CD4-positive, alpha-beta memory T cell (primary cell): ENCODE measurements at regions of chr11 and their contacts with region 1.

Region 1: DNA sequence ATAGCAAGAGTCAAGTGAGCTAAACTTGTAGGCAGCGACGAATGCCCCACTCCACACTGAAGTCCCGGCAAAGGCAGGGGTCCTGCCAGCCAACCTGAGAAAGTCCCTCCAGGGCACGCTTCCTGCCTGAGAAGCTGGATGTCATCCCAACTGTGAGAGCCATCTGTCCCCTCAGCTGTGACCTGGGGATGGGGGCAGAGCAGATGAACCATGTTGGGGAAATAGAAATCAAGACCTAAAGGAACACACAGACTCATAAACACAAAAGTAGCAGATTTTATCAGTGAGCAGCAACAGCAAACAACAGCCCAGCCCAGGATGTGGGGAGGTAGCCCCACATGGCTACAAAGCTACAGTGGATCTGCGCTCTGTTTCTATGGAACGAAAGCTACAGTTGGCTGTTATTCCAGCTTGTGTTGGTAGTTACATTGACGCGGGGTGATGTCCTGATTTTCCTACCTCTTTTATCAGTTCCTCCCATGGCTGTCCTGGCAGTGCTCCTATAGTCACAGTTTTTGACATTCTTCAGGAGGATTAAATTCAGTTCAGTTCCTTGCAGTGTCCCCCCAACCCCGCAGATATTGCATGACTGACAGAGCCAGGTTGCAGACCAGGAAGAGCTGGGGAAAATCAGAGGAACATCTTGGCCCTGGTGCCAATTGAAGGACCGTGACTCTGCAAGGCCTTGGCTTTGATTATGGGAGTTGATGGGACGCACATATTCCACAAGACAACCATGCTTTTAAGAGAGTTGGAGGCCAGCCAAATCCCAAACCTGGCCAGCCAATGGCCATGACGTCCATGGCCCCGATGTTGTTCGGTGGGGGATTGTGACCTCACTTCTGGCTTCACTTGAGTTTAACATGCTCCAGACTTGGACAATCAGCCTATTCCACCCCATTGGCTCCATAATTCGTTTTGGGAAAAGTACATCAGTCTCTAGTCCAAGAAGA is 14.6 kb downstream of the MRGPRD start:
- DNase-seq: peak in 4 of 5 donors; percentile 38 to 62 (median 46)
- H3K4me3 ChIP-seq: no peak overlapping the region
- H3K4me3 Mint-ChIP-seq: peak overlapping the region; percentile 24 to 79 (median 70)
- H3K27ac ChIP-seq: peak overlapping the region; percentile 0
- H3K27ac Mint-ChIP-seq: peak overlapping the region; percentile 79 to 96 (median 90)
- H3K4me1 ChIP-seq: peaks cover 48% of the 10 kb centered on the region
- H3K4me1 Mint-ChIP-seq: peaks cover 23 to 56% (median 41%) of the 10 kb centered on the region in 4 donors
- H3K27me3 ChIP-seq: no peaks in the 10 kb centered on the region
- H3K27me3 Mint-ChIP-seq: peaks cover 3 to 4% of the 10 kb centered on the region in 2 donors

Region 2: DNA sequence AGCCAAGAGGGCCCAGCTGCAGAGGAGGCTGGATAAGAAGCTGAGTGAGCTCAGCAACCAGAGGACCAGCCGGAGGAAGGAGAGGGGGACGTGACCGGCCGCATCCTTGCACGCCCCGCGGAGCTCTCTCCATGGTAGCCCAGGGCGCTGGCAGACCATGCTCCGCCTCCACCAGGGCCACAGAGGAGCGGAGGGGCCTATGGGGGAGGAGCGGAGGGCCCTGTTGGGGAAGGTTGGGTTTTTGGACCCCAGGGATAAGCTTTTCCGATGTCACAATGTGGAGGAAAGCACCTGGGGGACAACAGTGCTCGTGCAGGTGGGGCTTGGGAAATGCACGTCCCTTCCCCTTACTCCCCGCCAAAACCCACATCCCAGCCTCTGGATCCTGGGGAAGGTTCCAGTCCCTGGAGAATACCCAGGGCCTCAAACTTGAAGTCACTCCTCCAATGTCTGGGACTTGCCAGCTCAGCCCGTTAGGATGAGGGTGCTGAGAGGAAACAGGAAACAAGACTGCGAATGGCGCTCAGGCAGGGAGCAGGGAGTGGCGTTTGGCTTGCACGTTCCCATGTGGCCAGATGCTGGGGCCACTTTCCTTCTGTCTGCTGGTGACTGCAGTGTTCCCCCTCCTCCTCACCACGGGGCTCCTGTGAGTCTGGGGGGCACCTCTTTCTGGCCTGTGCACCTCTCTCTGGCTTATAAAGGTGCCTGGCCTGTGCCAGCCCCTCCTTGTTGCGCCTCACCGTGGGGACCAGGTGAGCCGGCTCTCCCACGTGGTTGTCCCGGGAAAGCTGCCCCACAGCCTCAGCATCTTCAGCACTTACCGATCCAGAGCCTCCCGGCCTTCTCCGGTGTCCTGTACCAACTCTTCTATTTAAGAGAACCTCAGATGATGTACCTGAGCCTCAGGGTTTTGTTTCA is 26.3 kb before region 1 on chr11:
- CTCF ChIA-PET with region 1: no interaction called
- POLR2A ChIA-PET with region 1: no interaction called
- intact Hi-C with region 1: no loop called
- DNase-seq: no peak
- H3K4me3 ChIP-seq: no peak overlapping the region
- H3K4me3 Mint-ChIP-seq: no peak overlapping the region
- H3K27ac ChIP-seq: no peak overlapping the region
- H3K27ac Mint-ChIP-seq: no peak overlapping the region
- H3K4me1 ChIP-seq: no peaks in the 10 kb centered on the region
- H3K4me1 Mint-ChIP-seq: no peaks in the 10 kb centered on the region
- H3K27me3 ChIP-seq: no peaks in the 10 kb centered on the region
- H3K27me3 Mint-ChIP-seq: no peaks in the 10 kb centered on the region

Region 3: DNA sequence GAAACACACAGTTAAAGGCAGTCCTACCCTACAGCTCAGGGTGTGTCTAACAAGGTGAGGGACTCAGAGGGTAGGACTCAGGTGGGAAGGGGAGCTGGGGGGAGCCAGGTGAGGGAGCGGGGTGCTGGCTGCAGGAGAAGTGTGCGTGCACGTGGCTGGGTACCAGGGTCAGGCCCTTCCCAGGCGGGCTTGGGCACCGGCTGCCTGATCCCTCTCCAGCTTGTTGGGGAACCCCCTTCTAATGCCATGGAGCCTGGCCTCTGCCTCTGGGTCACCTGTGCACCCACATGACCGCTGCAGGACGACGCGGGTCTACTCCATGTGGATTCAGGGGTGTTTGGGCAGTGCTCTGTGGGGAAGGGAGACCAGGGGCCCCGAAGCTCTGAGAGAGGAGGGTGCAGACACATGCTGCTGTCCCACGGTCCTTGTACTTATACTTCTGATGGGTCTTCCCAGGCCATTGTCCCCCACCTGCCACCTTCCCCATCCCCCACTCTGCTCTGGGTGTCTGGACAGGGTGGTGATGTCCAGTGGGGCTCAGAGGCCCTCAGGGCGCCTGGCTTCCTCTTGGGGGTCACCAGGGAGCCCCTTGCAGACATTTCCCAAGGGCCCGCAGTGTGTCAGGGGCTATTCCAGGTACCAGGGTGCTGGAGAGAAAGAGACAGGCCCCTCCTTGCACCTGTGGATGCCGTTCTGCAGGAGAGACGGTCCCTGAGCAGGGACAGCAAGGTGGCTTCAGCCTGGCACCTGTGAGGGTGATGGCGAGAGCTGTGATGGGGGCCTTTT is 25.0 kb after region 1 on chr11:
- CTCF ChIA-PET with region 1: no interaction called
- POLR2A ChIA-PET with region 1: no interaction called
- intact Hi-C with region 1: no loop called
- DNase-seq: no peak
- H3K4me3 ChIP-seq: no peak overlapping the region
- H3K4me3 Mint-ChIP-seq: no peak overlapping the region
- H3K27ac ChIP-seq: no peak overlapping the region
- H3K27ac Mint-ChIP-seq: no peak overlapping the region
- H3K4me1 ChIP-seq: no peaks in the 10 kb centered on the region
- H3K4me1 Mint-ChIP-seq: peaks cover 2 to 9% (median 5%) of the 10 kb centered on the region in 4 donors
- H3K27me3 ChIP-seq: no peaks in the 10 kb centered on the region
- H3K27me3 Mint-ChIP-seq: peaks cover 14 to 27% of the 10 kb centered on the region in 2 donors

Region 4: DNA sequence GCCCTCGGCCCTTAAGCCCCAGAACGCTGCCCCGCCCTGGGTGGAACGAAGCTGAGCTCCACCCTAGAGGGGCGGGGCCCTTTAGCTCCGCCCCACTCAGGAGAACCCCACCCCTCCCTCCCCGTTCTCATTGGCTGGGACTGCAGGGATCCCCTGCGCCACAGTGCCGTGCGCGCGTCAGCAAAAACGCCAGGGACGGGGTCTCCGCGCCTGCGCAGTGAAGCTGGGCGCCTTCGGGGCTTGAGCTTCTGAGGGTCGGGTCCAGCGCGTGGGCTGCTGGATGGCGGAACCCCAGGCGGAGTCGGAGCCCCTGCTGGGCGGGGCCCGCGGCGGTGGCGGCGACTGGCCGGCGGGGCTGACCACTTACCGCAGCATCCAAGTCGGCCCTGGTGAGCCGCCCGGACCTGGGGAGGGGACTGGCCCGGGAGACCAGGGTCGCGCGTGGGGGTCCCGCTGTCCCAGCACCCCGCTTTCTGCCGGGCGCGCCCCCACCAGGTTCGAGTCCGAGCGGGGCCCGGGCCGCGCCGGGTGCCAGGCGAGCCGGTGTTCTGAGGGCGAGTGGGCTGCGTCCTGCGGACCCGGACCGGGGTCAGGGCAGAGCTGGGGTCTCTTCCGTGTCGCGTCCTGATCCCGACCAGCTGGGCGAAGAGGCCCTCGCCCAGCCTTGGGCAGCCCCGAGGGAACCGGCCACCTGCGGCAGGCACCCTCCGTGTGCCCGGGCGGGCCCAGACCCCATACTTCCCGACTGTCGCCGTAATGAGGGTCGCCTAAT is 82.7 kb after region 1 on chr11 and contains the start of gene TPCN2:
- CTCF ChIA-PET with region 1: interaction called, 3 read pairs
- POLR2A ChIA-PET with region 1: interaction called, 11 read pairs
- intact Hi-C with region 1: no loop called
- DNase-seq: peak; percentile 90 to 94 (median 92)
- H3K4me3 ChIP-seq: peak within 1 kb of the TSS; percentile 42 to 80
- H3K4me3 Mint-ChIP-seq: peak within 1 kb of the TSS; percentile 82 to 86 (median 84)
- H3K27ac ChIP-seq: peak within 1 kb of the TSS; percentile 84
- H3K27ac Mint-ChIP-seq: peak within 1 kb of the TSS; percentile 86 to 96 (median 91)
- H3K4me1 ChIP-seq: peaks cover 30% of the 10 kb centered on the region
- H3K4me1 Mint-ChIP-seq: peaks cover 7 to 45% (median 22%) of the 10 kb centered on the region in 4 donors
- H3K27me3 ChIP-seq: no peaks in the 10 kb centered on the region
- H3K27me3 Mint-ChIP-seq: no peaks in the 10 kb centered on the region
- total RNA-seq, gene TPCN2: 22.4 to 23.0 TPM